PC-3 (cell line): ENCODE measurements at regions of chrX and their contacts with region 1.

Region 1: GRCh38 chrX:40108959-40109287 is 11.2 kb upstream of the BCOR start:
- DNase-seq: peak; percentile 79
- ATAC-seq: peak; percentile 32
- H3K4me3 ChIP-seq: peak overlapping the region; percentile 76
- H3K27ac ChIP-seq: peak overlapping the region; percentile 44
- H3K4me1 ChIP-seq: peaks cover 32% of the 10 kb centered on the region
- H3K27me3 ChIP-seq: no peaks in the 10 kb centered on the region
- CTCF ChIP-seq: no peak

Region 2: GRCh38 chrX:40153335-40154249 is 44.7 kb after region 1 on chrX:
- CTCF ChIA-PET with region 1: no interaction called
- POLR2A ChIA-PET with region 1: no interaction called
- intact Hi-C with region 1: loop called (anchors 2 kb)
- DNase-seq: peak; percentile 36
- ATAC-seq: peak; percentile 2; the same call in 1 of the 2 replicates
- H3K4me3 ChIP-seq: peak overlapping the region; percentile 84
- H3K27ac ChIP-seq: no peak overlapping the region
- H3K4me1 ChIP-seq: peaks cover 32% of the 10 kb centered on the region
- H3K27me3 ChIP-seq: no peaks in the 10 kb centered on the region
- CTCF ChIP-seq: 0 out of 2 replicates have a peak, but pooled peaks have one; percentile 8

Region 3: DNA sequence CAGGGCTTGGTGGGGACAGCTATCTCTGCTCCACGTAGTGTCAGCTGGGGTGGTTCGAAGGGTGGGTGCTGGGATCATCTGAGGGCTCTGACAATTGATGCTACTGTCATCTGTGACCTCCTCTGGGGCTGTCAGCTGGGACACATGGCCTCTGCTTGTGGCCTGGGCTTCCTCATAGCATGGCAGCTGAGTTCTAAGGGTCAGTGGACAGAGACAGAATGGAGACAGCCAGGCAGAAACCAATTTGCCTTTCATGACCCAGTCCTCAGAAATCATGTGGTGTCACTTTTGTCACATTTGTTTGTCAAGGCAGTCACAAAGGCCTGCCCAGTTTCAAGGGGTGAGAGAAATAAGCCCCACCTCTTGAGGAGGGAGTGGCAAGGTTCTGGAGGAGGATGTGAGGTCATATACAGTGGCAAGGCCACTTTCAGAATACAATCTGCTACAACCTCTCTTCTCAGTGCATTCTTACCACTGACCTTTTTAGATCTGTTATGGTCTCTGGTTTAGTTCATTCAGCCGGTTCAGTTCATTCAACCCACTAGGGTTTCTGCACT is 92.5 kb after region 1 on chrX:
- CTCF ChIA-PET with region 1: no interaction called
- POLR2A ChIA-PET with region 1: no interaction called
- intact Hi-C with region 1: no loop called
- DNase-seq: no peak
- ATAC-seq: no peak
- H3K4me3 ChIP-seq: no peak overlapping the region
- H3K27ac ChIP-seq: no peak overlapping the region
- H3K4me1 ChIP-seq: no peaks in the 10 kb centered on the region
- H3K27me3 ChIP-seq: no peaks in the 10 kb centered on the region
- CTCF ChIP-seq: no peak